ENCODE measurements at regions of chr17 and their contacts with region 1.

Region 1: DNA sequence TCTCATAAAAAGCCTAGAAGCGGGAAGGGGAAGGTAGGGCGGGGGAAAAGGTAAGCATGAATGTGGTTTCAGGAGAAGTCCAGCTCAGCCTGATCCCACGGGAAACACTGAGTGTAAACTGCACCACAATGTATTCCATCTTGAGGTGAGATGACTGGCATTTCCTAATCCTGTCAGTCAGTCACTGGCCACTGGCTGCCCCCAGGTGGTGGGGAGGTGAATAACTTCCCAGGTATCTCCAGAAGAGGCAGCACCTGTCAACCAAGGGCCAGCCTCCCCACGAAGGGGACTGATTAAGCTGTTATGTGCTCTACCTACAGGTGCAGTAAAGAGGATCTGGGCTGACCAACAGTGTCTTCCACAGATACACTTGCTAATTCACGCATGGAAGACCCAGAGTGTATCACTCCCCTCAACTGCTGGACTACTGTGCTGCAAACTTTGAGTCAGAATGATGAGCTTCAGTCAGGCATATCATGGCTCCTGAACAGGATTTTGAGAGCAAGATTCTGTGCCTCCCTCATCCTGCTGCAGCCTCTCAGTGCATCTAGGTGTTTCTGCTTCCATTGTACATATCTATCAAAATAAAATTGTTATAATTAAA is 108.5 kb upstream of the CCL2 start:
- DNase-seq: peak; percentile 64
- H3K4me3 ChIP-seq: no peak overlapping the region; a peak in 1 of 4 replicates
- H3K27ac ChIP-seq: no peak overlapping the region
- H3K4me1 ChIP-seq: no peaks in the 10 kb centered on the region; a peak in 1 of 4 replicates
- H3K27me3 ChIP-seq: no peaks in the 10 kb centered on the region
- CTCF ChIP-seq: peak; percentile 46
- EP300 ChIP-seq: no peak
- RAD21 ChIP-seq: peak; percentile 85

Region 2: DNA sequence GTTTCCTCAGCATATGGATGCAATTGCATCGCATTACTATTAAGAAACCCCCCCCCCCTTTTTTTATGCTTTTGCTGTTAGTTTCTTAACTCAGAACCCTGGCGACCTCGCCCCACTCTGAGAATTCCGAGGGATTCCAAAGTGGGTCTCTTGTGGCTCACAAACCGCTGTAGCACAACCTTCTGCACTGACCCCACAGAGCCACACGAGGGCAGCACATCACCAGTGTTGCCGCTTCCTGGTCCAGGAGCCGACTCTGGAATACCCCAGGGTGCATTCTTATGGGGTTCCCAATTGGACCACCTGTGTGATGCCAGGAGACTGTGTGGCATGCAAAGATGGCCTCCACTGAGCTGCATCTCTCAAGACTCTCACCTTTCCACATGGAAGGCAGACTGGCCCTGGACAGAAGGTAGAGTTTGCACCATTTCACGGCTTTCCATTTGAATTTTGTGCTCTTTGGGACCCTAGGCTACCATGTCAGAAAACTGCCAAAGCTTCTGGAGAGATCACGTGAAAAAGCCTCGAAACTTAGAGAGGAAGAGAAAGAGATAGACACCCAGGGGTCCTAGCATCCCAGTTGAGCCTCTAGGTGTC is 420.8 kb before region 1 on chr17:
- CTCF ChIA-PET with region 1: interaction called, 14 read pairs
- POLR2A ChIA-PET with region 1: no interaction called
- DNase-seq: peak; percentile 70
- H3K4me3 ChIP-seq: no peak overlapping the region
- H3K27ac ChIP-seq: no peak overlapping the region
- H3K4me1 ChIP-seq: no peaks in the 10 kb centered on the region
- H3K27me3 ChIP-seq: no peaks in the 10 kb centered on the region
- CTCF ChIP-seq: peak; percentile 74
- EP300 ChIP-seq: no peak
- RAD21 ChIP-seq: peak; percentile 82

Region 3: GRCh38 chr17:33779225-33779591 is 367.3 kb before region 1 on chr17:
- CTCF ChIA-PET with region 1: interaction called, 162 read pairs
- POLR2A ChIA-PET with region 1: no interaction called
- DNase-seq: peak; percentile 57
- H3K4me3 ChIP-seq: peak overlapping the region in 1 of 2 experiments; percentile 39; a peak in 1 of 4 replicates
- H3K27ac ChIP-seq: no peak overlapping the region
- H3K4me1 ChIP-seq: peaks cover 0 to 3% of the 10 kb centered on the region in 2 experiments; a peak in 1 of 4 replicates
- H3K27me3 ChIP-seq: no peaks in the 10 kb centered on the region
- CTCF ChIP-seq: peak; percentile 97
- EP300 ChIP-seq: no peak
- RAD21 ChIP-seq: peak; percentile 96

Region 4: GRCh38 chr17:33945646-33946546 is 200.6 kb before region 1 on chr17:
- CTCF ChIA-PET with region 1: interaction called, 12 read pairs
- POLR2A ChIA-PET with region 1: no interaction called
- DNase-seq: no peak
- H3K4me3 ChIP-seq: no peak overlapping the region
- H3K27ac ChIP-seq: no peak overlapping the region
- H3K4me1 ChIP-seq: peaks cover 0 to 24% of the 10 kb centered on the region in 2 experiments; a peak in 1 of 4 replicates
- H3K27me3 ChIP-seq: no peaks in the 10 kb centered on the region
- CTCF ChIP-seq: no peak
- EP300 ChIP-seq: no peak
- RAD21 ChIP-seq: peak; percentile 18; the same call in 1 of the 2 replicates

Region 5: GRCh38 chr17:34006126-34006525 is 140.4 kb before region 1 on chr17:
- CTCF ChIA-PET with region 1: no interaction called
- POLR2A ChIA-PET with region 1: no interaction called
- DNase-seq: no peak
- H3K4me3 ChIP-seq: no peak overlapping the region
- H3K27ac ChIP-seq: no peak overlapping the region
- H3K4me1 ChIP-seq: no peaks in the 10 kb centered on the region
- H3K27me3 ChIP-seq: no peaks in the 10 kb centered on the region
- CTCF ChIP-seq: no peak
- EP300 ChIP-seq: no peak
- RAD21 ChIP-seq: no peak

Region 6: GRCh38 chr17:34118564-34118963 is 28.0 kb before region 1 on chr17:
- CTCF ChIA-PET with region 1: interaction called, 10 read pairs
- POLR2A ChIA-PET with region 1: no interaction called
- DNase-seq: no peak
- H3K4me3 ChIP-seq: no peak overlapping the region
- H3K27ac ChIP-seq: no peak overlapping the region
- H3K4me1 ChIP-seq: peaks cover 0 to 4% of the 10 kb centered on the region in 2 experiments; a peak in 1 of 4 replicates
- H3K27me3 ChIP-seq: no peaks in the 10 kb centered on the region
- CTCF ChIP-seq: no peak
- EP300 ChIP-seq: no peak
- RAD21 ChIP-seq: no peak

Region 7: GRCh38 chr17:34156741-34157589 is 10.4 kb after region 1 on chr17:
- CTCF ChIA-PET with region 1: interaction called, 59 read pairs
- POLR2A ChIA-PET with region 1: interaction called, 3 read pairs
- DNase-seq: peak; percentile 74
- H3K4me3 ChIP-seq: peak overlapping the region in 1 of 2 experiments; percentile 31; a peak in 1 of 4 replicates
- H3K27ac ChIP-seq: no peak overlapping the region
- H3K4me1 ChIP-seq: peaks cover 0 to 3% of the 10 kb centered on the region in 2 experiments; a peak in 1 of 4 replicates
- H3K27me3 ChIP-seq: no peaks in the 10 kb centered on the region
- CTCF ChIP-seq: no peak
- EP300 ChIP-seq: no peak
- RAD21 ChIP-seq: no peak

Region 8: GRCh38 chr17:34306466-34306865 is 159.9 kb after region 1 on chr17:
- CTCF ChIA-PET with region 1: no interaction called
- POLR2A ChIA-PET with region 1: no interaction called
- DNase-seq: peak; percentile 32
- H3K4me3 ChIP-seq: no peak overlapping the region
- H3K27ac ChIP-seq: no peak overlapping the region
- H3K4me1 ChIP-seq: 0 out of 4 replicates have a peak, but pooled peaks cover 0 to under 1% of the 10 kb centered on the region in 2 experiments
- H3K27me3 ChIP-seq: no peaks in the 10 kb centered on the region
- CTCF ChIP-seq: peak; percentile 75
- EP300 ChIP-seq: no peak
- RAD21 ChIP-seq: peak; percentile 70

Measured in SK-N-SH (cell line).